K562 (cell line): ENCODE measurements at regions of chr4 and their contacts with region 1.

Region 1: GRCh38 chr4:128287871-128288688 is 467 bp upstream of the PGRMC2 start:
- DNase-seq: peak; percentile 97 to 99 (median 98)
- ATAC-seq: peak; percentile 83
- H3K4me3 ChIP-seq: peak overlapping the region; percentile 59
- H3K27ac ChIP-seq: peak overlapping the region; percentile 89
- H3K4me1 ChIP-seq: peaks cover 4 to 28% of the 10 kb centered on the region in 2 experiments
- H3K27me3 ChIP-seq: no peaks in the 10 kb centered on the region
- CTCF ChIP-seq: peak; percentile 27 to 38 (median 33); a peak in 5 of 6 replicates
- EP300 ChIP-seq: peak; percentile 49; the same call in 1 of the 2 replicates
- POLR2A ChIP-seq: peak; percentile 82
- RAD21 ChIP-seq: 0 out of 4 replicates have a peak, but pooled peaks of 1 of the 2 experiments have one; percentile 17

Region 2: DNA sequence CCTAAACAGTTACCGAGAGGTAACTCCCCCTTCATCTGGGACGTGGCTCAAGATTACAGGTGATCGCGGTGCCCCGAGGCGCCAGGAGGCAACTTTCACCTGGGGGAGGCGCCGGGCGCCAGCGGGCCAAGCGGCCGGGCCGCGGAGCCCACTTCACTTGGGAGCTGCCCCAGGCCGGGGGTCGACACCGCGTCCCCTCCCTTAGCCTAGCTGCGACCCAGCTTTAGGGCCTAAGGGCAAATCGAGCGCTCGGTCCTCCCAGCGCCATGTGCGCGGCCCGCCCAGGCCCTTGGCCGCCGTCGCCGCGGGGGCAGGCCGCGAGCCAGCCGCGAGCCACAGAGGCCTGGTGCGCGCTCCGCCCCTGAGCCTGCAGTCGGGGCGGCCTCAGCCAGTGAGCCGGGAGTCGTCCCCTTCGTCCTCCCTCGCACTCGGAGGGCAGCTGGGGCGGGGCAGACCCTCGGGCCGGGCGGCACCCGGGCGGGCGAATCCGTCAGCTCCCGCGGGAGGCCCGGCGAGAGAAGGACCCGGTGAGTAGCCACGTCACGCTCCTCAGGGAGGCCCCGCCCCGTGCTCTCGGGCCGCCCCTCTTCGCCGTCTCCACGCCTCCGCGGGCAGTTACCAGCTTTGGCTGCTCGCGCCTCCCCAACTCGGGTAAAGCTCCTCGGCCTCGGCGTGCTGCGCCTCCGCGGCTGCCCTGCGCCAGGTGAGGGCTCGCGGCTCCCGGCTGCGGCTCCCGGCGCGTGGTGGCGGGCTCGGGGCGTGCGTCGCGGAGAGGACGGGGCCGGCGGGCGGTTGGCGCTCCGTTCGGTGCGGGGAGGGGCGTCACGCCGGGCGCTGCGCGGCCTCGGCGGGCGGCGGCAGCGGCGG is 227.1 kb before region 1 on chr4 and contains the start of gene LARP1B:
- CTCF ChIA-PET with region 1: no interaction called
- POLR2A ChIA-PET with region 1: no interaction called
- in situ Hi-C with region 1: no loop called
- intact Hi-C with region 1: loop called (anchors 10 kb)
- DNase-seq: peak; percentile 94 to 97 (median 96)
- ATAC-seq: peak; percentile 93
- H3K4me3 ChIP-seq: peak within 1 kb of the TSS; percentile 79
- H3K27ac ChIP-seq: peak within 1 kb of the TSS; percentile 97
- H3K4me1 ChIP-seq: peaks cover 0 to 27% of the 10 kb centered on the region in 2 experiments; a peak in 4 of 5 replicates
- H3K27me3 ChIP-seq: no peaks in the 10 kb centered on the region
- CTCF ChIP-seq: no peak
- EP300 ChIP-seq: 0 out of 2 replicates have a peak, but pooled peaks have one; percentile 3
- POLR2A ChIP-seq: peak; percentile 84
- RAD21 ChIP-seq: no peak
- polyA plus RNA-seq, gene LARP1B: 19.2 to 25.4 TPM

Region 3: GRCh38 chr4:128307123-128307571 is 19.1 kb after region 1 on chr4:
- CTCF ChIA-PET with region 1: no interaction called
- POLR2A ChIA-PET with region 1: interaction called, 7 read pairs
- in situ Hi-C with region 1: no loop called
- intact Hi-C with region 1: loop called (anchors 2 kb)
- DNase-seq: peak in 1 of 4 experiments; percentile 56
- ATAC-seq: peak; percentile 42
- H3K4me3 ChIP-seq: no peak overlapping the region
- H3K27ac ChIP-seq: peak overlapping the region; percentile 52
- H3K4me1 ChIP-seq: peaks cover 29 to 46% of the 10 kb centered on the region in 2 experiments
- H3K27me3 ChIP-seq: no peaks in the 10 kb centered on the region
- CTCF ChIP-seq: no peak
- EP300 ChIP-seq: no peak
- POLR2A ChIP-seq: no peak
- RAD21 ChIP-seq: no peak

Region 4: GRCh38 chr4:128341634-128342033 is 53.6 kb after region 1 on chr4:
- CTCF ChIA-PET with region 1: no interaction called
- POLR2A ChIA-PET with region 1: interaction called, 3 read pairs
- in situ Hi-C with region 1: no loop called
- intact Hi-C with region 1: loop called (anchors 2 kb)
- DNase-seq: peak in 1 of 4 experiments; percentile 50
- ATAC-seq: peak; percentile 92
- H3K4me3 ChIP-seq: no peak overlapping the region
- H3K27ac ChIP-seq: no peak overlapping the region
- H3K4me1 ChIP-seq: peaks cover 0 to 12% of the 10 kb centered on the region in 2 experiments; a peak in 2 of 5 replicates
- H3K27me3 ChIP-seq: no peaks in the 10 kb centered on the region
- CTCF ChIP-seq: peak; percentile 22 to 44 (median 33); a peak in 3 of 6 replicates
- EP300 ChIP-seq: no peak
- POLR2A ChIP-seq: no peak
- RAD21 ChIP-seq: peak in 1 of 2 experiments; percentile 15; a peak in 1 of 4 replicates

Region 5: GRCh38 chr4:128517739-128518510 is 229.8 kb after region 1 on chr4:
- CTCF ChIA-PET with region 1: no interaction called
- POLR2A ChIA-PET with region 1: no interaction called
- in situ Hi-C with region 1: no loop called
- intact Hi-C with region 1: loop called (anchors 10 kb)
- DNase-seq: peak; percentile 69 to 89 (median 78)
- ATAC-seq: peak; percentile 92
- H3K4me3 ChIP-seq: no peak overlapping the region
- H3K27ac ChIP-seq: peak overlapping the region; percentile 95
- H3K4me1 ChIP-seq: peaks cover 6 to 65% of the 10 kb centered on the region in 2 experiments
- H3K27me3 ChIP-seq: no peaks in the 10 kb centered on the region
- CTCF ChIP-seq: no peak
- EP300 ChIP-seq: peak; percentile 81
- POLR2A ChIP-seq: no peak
- RAD21 ChIP-seq: no peak; a peak in 2 of 4 replicates

Region 6: DNA sequence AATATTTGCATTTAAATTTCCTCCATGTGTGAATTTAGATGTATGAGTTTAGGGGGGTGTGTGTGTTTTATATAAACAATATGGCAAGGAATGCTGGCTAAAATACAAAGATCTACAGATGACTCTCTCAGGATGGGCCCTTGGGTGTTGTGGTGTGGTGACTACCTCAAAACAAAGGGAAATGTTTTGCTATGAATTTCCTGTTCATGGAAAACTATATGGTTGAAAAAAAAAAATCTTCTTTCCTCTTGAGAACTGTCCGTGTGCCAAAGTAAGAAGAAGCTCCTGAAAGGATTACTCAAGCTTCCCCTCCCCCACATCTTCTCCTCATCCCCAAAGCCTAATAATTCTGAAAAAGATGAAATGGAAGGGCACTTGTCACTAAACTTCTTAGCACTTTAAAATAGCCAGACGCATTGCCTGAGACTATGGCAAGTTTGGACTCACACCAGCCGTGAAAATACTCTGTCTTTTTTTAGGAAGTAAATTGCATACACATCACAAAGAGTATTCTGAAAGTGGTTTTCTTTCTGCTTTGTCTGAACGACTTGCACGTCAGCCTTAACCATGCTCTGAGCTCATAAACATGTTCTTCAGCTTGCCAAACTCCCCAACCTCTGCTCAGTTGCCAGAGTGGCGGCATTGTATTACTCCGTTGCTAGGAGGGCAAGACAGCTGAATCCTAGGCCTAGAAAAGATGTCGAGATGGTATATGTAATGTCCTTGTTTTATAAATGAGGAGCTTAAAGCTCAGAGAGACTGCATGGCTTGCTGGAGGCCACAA is 271.0 kb after region 1 on chr4:
- CTCF ChIA-PET with region 1: no interaction called
- POLR2A ChIA-PET with region 1: interaction called, 3 read pairs
- in situ Hi-C with region 1: no loop called
- intact Hi-C with region 1: loop called (anchors 10 kb)
- DNase-seq: no peak
- ATAC-seq: no peak
- H3K4me3 ChIP-seq: no peak overlapping the region
- H3K27ac ChIP-seq: no peak overlapping the region
- H3K4me1 ChIP-seq: peaks cover 0 to 6% of the 10 kb centered on the region in 2 experiments; a peak in 3 of 5 replicates
- H3K27me3 ChIP-seq: no peaks in the 10 kb centered on the region
- CTCF ChIP-seq: no peak
- EP300 ChIP-seq: no peak
- POLR2A ChIP-seq: no peak
- RAD21 ChIP-seq: no peak

Region 7: GRCh38 chr4:129093191-129093920 is 805.3 kb after region 1 on chr4 and contains the start of gene SCLT1:
- CTCF ChIA-PET with region 1: no interaction called
- POLR2A ChIA-PET with region 1: no interaction called
- in situ Hi-C with region 1: no loop called
- intact Hi-C with region 1: loop called (anchors 5 kb)
- DNase-seq: peak; percentile 93 to 99 (median 94)
- ATAC-seq: peak; percentile 86
- H3K4me3 ChIP-seq: peak within 1 kb of the TSS; percentile 68
- H3K27ac ChIP-seq: peak within 1 kb of the TSS; percentile 93
- H3K4me1 ChIP-seq: peaks cover 0 to 5% of the 10 kb centered on the region in 2 experiments; a peak in 4 of 5 replicates
- H3K27me3 ChIP-seq: no peaks in the 10 kb centered on the region
- CTCF ChIP-seq: no peak
- EP300 ChIP-seq: peak; percentile 38; the same call in 1 of the 2 replicates
- POLR2A ChIP-seq: peak; percentile 95
- RAD21 ChIP-seq: no peak
- polyA plus RNA-seq, gene SCLT1: 8.0 to 8.6 TPM